ENCODE measurements at regions of chr3 and their contacts with region 1.

Region 1: GRCh38 chr3:40191850-40192448 is 117.6 kb upstream of the EIF1B start:
- DNase-seq: peak in 1 of 2 donors; percentile 60
- ATAC-seq: peak; percentile 69

Region 2: DNA sequence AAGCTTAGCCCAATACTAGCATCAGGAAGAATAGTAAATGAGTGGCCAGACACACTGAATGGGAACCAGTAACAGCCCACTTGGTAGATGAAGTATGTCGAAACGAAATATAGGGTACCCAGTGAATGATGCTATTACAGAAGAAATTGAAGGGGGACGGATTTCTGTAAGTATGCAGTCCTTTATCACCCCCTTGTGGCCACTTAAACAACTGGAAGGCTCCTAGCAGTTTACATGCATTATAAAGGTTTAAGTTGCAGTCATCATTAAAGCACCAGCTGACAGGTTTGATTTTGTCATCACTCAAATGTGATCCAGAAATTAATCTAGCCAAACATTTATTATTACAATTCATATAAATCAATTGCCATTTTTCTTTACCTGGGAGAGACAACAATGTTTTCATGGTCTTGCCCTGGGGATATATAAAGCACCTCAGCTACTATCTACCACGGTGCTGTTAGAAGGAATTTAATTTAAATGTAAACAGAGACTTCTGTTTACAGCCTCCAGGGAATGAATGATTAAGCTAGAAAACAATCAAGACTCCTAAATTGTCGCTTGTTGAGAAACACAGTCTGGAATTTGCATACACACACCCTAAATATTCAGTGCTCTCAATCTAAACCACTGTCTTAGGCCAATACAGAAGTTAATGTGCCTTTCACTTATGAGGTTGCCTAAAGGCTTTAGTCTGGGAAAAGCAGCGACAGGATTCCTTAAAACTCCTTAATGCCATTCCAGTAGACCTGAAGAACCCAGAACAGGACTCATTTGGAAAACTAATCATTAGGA is 125.3 kb after region 1 on chr3:
- intact Hi-C with region 1: loop called in 1 of 2 experiments (anchors 2 kb)
- DNase-seq: peak in 1 of 2 donors; percentile 23
- ATAC-seq: peak; percentile 47

Measured in left colon (tissue), 2 donors.